ENCODE measurements at regions of chr7 and their contacts with region 1.

Region 1: DNA sequence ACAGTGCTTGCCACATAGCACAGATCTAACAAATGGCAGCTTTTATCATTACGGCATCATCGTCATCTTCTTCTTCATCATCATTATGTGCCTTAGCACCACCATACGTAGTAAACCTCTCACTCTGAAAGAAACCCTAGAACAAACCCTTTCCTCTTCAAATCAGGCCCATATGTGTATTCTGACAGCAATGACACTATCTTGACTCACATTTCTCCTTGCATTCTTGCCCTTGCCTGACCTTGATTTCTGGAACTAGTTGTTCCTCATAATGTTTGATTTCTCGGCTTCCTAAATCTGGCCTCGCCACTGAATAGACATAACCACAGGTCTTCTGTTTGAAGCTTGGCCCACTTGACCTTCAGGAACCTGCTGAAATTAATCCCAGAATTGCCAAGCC is 115.3 kb downstream of the DGKI start:
- DNase-seq: no peak
- H3K4me3 Mint-ChIP-seq: no peak overlapping the region
- H3K27ac Mint-ChIP-seq: no peak overlapping the region
- H3K4me1 Mint-ChIP-seq: no peaks in the 10 kb centered on the region
- H3K27me3 Mint-ChIP-seq: peaks cover 17% of the 10 kb centered on the region
- CTCF ChIP-seq: no peak

Region 2: DNA sequence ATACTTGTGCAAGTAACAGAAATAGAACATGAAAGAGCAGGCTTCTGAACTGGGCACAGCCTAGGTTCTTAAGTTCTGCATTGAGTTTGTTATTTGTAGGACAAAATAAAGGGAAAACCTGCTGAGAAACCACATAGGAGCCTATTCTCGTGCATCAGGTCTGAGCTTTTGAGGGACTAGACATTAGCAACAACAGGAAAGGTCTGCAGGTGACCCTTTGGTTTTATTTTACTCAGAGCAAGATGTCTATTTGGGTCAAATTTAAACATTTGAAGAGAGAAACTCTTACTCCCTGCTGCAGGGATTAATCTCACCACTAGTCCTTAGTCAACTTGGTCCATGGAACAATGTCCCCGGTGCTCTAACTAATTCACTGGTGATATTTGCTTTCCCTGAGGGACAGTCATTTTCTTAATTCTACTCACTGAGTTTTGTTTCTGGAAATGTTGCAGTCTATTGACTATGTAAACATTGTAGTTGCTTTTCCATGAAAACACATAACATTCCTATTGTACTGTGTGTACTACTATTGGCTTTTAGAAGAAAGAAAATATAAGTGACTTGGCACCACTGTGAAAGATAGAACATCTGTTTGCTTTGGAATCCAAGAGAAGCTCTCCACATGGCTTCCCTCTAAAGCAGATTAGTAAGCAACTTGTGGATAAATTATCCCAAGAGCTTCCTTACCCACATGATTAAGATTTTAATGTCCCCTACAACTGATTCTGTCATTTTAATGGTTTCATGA is 754.8 kb before region 1 on chr7:
- CTCF ChIA-PET with region 1: no interaction called
- intact Hi-C with region 1: loop called (anchors 5 kb)
- DNase-seq: no peak
- H3K4me3 Mint-ChIP-seq: no peak overlapping the region
- H3K27ac Mint-ChIP-seq: no peak overlapping the region
- H3K4me1 Mint-ChIP-seq: no peaks in the 10 kb centered on the region
- H3K27me3 Mint-ChIP-seq: no peaks in the 10 kb centered on the region
- CTCF ChIP-seq: no peak